K562 (cell line): ENCODE measurements at regions of chr2 and their contacts with region 1.

Region 1: GRCh38 chr2:27370026-27370815 is at the starts of genes EIF2B4 and SNX17:
- DNase-seq: peak; percentile 87 to 99 (median 91)
- ATAC-seq: peak; percentile 96
- H3K4me3 ChIP-seq: peak within 1 kb of the TSS; percentile 86
- H3K27ac ChIP-seq: peak within 1 kb of the TSS; percentile 96
- H3K4me1 ChIP-seq: peaks cover 20 to 22% of the 10 kb centered on the region in 2 experiments
- H3K27me3 ChIP-seq: no peaks in the 10 kb centered on the region
- CTCF ChIP-seq: peak; percentile 92 to 97 (median 94)
- EP300 ChIP-seq: peak; percentile 49; the same call in 1 of the 2 replicates
- POLR2A ChIP-seq: peak; percentile 88
- RAD21 ChIP-seq: peak; percentile 71 to 77
- polyA plus RNA-seq, gene EIF2B4: 29.7 to 48.6 TPM
- polyA plus RNA-seq, gene SNX17: 3.0 to 7.5 TPM

Region 2: DNA sequence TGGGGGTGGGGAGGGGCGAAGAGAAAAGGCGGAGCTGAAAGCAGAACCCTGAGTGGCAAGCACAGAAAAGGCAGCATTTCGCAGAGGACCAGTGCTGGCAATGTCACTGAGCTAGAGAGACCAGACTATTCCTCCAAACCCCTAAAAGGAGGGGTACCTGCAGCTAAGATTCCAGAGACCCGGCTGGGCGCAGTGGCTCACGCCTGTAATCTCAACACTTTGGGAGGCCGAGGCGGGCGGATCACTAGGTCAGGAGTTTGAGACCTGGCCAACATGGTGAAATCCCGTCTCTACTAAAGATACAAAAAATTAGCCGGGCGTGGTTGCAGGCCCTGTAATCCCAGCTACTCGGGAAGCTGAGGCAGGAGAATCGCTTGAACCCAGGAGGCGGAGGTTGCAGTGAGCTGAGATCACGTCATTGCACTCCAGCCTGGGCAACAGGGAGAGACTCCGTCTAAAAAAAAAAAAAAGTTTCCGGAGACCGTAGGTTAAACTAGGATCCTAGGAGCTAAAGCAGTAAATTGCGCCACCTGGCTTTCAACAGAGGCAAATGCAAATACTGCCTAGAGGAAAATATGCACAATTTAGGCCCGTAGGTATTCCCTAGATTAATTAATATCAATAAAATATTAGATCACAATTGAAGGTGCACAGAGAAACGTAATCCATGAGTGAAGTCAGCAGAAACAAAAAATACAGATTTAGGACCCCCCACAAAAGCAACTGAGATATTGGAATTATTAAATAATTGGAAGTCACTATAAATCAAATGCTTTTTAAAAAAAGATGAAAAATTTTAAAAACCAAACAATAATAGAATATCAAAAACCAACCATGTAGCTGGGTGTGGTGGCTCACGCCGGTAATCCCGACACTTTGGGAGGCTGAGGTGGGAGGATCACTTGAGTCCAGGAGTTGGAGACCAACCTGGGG is 66.9 kb before region 1 on chr2:
- CTCF ChIA-PET with region 1: no interaction called
- POLR2A ChIA-PET with region 1: no interaction called
- in situ Hi-C with region 1: no loop called
- intact Hi-C with region 1: loop called (anchors 5 kb)
- DNase-seq: peak; percentile 69 to 82 (median 75)
- ATAC-seq: peak; percentile 87
- H3K4me3 ChIP-seq: peak overlapping the region; percentile 26
- H3K27ac ChIP-seq: no peak overlapping the region
- H3K4me1 ChIP-seq: peaks cover 0 to 10% of the 10 kb centered on the region in 2 experiments; a peak in 3 of 5 replicates
- H3K27me3 ChIP-seq: no peaks in the 10 kb centered on the region
- CTCF ChIP-seq: peak; percentile 80 to 93 (median 85)
- EP300 ChIP-seq: no peak
- POLR2A ChIP-seq: no peak
- RAD21 ChIP-seq: peak; percentile 80 to 85

Region 3: GRCh38 chr2:27322766-27323595 is 47.2 kb before region 1 on chr2 and contains the start of gene MPV17:
- CTCF ChIA-PET with region 1: interaction called, 5 read pairs
- POLR2A ChIA-PET with region 1: interaction called, 4 read pairs
- in situ Hi-C with region 1: no loop called
- intact Hi-C with region 1: loop called (anchors 1 kb)
- DNase-seq: peak; percentile 96
- ATAC-seq: peak; percentile 95
- H3K4me3 ChIP-seq: peak within 1 kb of the TSS; percentile 71
- H3K27ac ChIP-seq: peak within 1 kb of the TSS; percentile 98
- H3K4me1 ChIP-seq: peaks cover 8 to 21% of the 10 kb centered on the region in 2 experiments; a peak in 4 of 5 replicates
- H3K27me3 ChIP-seq: no peaks in the 10 kb centered on the region
- CTCF ChIP-seq: no peak
- EP300 ChIP-seq: 0 out of 2 replicates have a peak, but pooled peaks have one; percentile 28
- POLR2A ChIP-seq: peak; percentile 98
- RAD21 ChIP-seq: no peak; a peak in 1 of 4 replicates
- polyA plus RNA-seq, gene MPV17: 69.8 to 81.8 TPM

Region 4: DNA sequence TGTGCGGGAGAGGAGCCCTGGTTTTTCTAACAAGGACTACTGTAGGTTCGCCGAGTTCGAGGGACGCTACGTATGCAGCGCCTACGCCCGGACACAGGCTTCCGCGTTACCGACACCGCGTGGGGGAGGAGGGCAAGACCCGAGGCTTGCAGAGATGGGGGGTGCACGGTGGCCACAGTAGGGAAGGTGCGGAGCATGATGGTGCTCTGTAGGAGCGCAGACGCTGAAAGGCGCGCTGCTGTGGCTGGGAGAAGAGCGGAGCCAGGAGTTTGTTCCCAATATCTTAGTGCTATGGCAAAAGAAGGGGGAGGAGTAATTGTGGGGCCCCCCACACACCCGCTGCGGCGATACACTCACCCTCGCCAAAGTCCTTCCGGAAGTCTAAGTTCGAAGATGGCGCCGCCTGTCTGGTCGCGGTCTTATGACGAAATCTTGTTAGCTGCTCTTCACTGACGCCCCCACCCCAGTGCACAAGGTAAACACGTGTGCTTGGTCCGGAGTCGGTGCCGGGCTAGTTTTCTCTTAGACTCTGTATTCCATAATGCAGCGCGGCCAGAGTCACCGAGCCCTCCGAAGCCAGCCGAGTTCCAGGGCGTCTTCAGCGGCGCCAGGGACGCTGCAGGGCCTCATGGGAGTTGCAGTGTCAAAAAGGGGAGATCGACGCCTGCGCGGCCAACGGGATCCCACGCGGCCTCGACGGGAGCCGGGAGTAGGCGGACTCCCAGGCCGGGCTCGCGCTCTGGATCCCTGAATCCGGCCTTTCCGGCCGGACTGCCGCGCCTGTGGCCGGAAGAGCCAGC is 13.6 kb before region 1 on chr2 and contains the start of gene GTF3C2:
- CTCF ChIA-PET with region 1: interaction called, 4 read pairs
- POLR2A ChIA-PET with region 1: interaction called, 39 read pairs
- in situ Hi-C with region 1: no loop called
- intact Hi-C with region 1: loop called (anchors 1 kb)
- DNase-seq: peak; percentile 87 to 98 (median 89)
- ATAC-seq: peak; percentile 88
- H3K4me3 ChIP-seq: peak within 1 kb of the TSS; percentile 77
- H3K27ac ChIP-seq: peak within 1 kb of the TSS; percentile 98
- H3K4me1 ChIP-seq: peaks cover 12 to 19% of the 10 kb centered on the region in 2 experiments; a peak in 4 of 5 replicates
- H3K27me3 ChIP-seq: no peaks in the 10 kb centered on the region
- CTCF ChIP-seq: no peak
- EP300 ChIP-seq: peak; percentile 31
- POLR2A ChIP-seq: peak; percentile 88
- RAD21 ChIP-seq: no peak
- polyA plus RNA-seq, gene GTF3C2: 35.5 to 40.2 TPM

Region 5: DNA sequence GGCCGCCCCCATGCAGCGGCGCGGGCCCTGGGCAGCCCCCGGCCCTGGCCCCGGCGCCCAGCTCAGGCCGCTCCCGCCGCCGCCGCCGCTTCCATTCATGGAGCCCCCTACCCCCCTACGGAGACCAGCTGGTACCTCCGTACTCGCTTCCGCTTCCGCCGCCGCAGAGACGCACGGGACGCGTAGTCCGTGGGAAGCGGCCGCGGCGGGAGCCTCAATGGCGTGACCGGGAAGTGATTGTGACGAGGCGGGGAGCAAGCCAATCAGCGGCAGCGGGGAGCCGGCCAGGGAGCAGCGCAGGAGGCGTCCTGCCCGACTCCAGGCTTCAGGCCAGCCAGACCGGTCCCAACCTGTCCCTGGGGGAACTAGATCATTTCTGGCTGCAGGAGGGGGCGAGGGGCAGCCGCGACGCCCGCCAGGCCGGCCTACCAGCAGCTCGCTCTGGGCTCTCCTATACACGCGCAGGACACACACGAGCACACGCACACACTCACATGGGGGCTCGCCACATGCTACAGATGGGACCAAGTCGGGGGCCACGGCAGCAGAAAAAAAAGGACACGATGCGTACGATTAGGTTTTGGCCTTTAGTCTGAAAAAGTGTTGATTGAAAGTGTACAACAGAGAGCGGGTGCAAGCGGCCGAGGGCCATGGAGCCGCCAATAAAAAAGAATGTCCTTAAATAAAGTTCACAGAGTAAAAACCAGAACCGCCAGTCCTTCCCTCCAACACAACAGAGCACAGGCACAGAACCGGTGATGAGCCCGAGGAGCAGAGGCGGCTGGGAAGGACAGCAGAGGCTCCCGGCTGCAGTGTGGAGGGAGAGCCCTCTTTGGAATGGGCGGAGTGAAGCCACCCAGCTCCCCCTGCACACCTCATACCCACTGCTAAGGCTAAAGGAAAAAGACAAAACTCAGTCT is 10.7 kb after region 1 on chr2 and contains the start of gene ZNF513:
- CTCF ChIA-PET with region 1: no interaction called
- POLR2A ChIA-PET with region 1: interaction called, 41 read pairs
- in situ Hi-C with region 1: no loop called
- intact Hi-C with region 1: no loop called
- DNase-seq: peak; percentile 90 to 97 (median 92)
- ATAC-seq: peak; percentile 94
- H3K4me3 ChIP-seq: peak within 1 kb of the TSS; percentile 84
- H3K27ac ChIP-seq: peak within 1 kb of the TSS; percentile 92
- H3K4me1 ChIP-seq: peaks cover 7 to 38% of the 10 kb centered on the region in 2 experiments
- H3K27me3 ChIP-seq: no peaks in the 10 kb centered on the region
- CTCF ChIP-seq: no peak
- EP300 ChIP-seq: 0 out of 2 replicates have a peak, but pooled peaks have one; percentile 5
- POLR2A ChIP-seq: peak; percentile 90
- RAD21 ChIP-seq: no peak
- polyA plus RNA-seq, gene ZNF513: 0.04 to 0.15 TPM